ENCODE measurements at regions of chr14 and their contacts with region 1.

Region 1: GRCh38 chr14:92783816-92784431 is 10.2 kb upstream of the GOLGA5 start:
- DNase-seq: no peak

Region 2: DNA sequence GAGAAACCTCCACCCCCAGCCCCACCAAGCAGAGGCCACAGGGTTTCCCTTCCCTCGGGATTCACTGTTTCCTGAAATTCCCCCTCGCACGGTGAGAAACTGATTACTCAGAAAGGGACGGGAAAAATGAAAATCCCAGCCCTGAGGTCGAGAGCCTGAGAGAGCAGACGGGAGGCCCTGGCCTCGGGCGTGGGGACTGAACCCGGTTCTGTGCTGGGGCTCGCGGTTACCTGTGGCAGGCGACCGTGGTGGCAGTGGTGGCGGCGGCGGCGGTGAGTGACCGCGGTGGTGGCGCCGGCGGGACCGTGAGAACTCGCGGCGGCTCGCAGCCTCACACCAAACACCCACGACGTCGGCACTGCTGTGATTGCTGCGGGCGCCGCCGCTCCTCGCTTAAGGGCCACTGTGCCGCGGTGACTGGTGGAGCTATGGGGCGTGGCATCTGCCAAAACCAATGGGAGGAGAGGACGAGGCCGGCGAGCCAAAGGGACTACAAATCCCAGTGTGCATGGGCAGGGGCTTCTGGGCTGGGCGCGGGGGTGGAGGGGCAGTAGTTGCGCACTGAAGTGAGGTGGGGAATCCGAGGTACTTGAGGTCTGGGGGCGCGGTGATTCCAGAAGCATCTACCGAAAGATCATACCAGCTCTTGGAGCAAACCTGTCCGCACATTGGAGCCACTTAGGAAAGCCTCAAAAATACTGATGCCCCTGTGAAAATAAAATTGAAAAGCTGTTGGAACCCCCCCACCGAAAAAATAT is 35.5 kb before region 1 on chr14 and contains the start of gene LGMN:
- intact Hi-C with region 1: loop called (anchors 5 kb)
- DNase-seq: peak; percentile 97
- total RNA-seq, gene LGMN: 81.8 TPM

Region 3: DNA sequence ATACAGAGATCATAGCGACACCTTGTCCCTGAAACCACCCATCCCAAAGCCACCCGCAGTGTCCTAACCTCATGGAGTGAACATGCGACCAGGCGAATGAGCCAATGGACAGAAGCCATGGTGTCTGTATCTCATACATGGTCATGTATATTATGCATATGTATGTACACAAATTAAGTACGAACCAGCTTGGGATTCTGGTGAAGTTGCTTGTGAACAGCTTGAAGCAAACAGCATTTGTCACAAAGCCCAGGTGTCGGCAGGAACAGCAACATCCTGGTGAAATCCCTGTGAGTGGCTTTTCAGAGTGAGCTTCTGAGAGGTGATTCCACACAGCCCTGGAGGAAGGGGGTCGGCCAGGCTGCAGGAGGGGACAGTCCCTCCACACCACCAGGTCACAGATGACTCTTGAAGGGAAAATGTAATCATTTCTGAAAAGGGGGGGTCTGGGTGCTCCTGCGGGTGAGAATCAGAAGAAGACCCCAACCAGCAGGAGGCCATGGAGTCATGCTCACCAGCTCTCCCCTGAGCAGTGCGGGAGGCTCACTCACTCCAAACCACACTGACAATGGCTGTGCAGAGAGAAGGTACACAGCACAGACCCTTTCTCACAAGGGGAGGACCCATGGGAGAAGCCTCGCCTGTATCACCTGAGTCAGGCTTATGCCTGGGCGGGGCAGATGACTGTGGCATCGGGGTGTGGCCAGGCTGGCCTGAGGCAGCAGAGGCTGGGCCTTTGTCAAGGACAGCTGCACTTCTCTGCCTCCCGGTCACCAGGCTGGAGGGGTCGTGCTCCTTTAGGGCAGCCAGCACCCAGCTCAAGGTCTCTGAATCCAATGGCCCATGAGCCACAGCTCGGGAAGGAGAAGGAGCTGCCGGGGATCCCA is 153.4 kb after region 1 on chr14:
- intact Hi-C with region 1: no loop called
- DNase-seq: no peak

Measured in cardiac septum (tissue), 1 donor.